HEK293T (cell line): ENCODE measurements at regions of chr4 and their contacts with region 1.

Region 1: GRCh38 chr4:122821092-122821491 is 5.5 kb upstream of the FGF2 start:
- DNase-seq: no peak

Region 2: GRCh38 chr4:122832732-122833131 is 11.6 kb after region 1 on chr4:
- CTCF ChIA-PET with region 1: interaction called, 13 read pairs
- POLR2A ChIA-PET with region 1: no interaction called
- DNase-seq: no peak